SK-N-SH (cell line): ENCODE measurements at regions of chr10 and their contacts with region 1.

Region 1: DNA sequence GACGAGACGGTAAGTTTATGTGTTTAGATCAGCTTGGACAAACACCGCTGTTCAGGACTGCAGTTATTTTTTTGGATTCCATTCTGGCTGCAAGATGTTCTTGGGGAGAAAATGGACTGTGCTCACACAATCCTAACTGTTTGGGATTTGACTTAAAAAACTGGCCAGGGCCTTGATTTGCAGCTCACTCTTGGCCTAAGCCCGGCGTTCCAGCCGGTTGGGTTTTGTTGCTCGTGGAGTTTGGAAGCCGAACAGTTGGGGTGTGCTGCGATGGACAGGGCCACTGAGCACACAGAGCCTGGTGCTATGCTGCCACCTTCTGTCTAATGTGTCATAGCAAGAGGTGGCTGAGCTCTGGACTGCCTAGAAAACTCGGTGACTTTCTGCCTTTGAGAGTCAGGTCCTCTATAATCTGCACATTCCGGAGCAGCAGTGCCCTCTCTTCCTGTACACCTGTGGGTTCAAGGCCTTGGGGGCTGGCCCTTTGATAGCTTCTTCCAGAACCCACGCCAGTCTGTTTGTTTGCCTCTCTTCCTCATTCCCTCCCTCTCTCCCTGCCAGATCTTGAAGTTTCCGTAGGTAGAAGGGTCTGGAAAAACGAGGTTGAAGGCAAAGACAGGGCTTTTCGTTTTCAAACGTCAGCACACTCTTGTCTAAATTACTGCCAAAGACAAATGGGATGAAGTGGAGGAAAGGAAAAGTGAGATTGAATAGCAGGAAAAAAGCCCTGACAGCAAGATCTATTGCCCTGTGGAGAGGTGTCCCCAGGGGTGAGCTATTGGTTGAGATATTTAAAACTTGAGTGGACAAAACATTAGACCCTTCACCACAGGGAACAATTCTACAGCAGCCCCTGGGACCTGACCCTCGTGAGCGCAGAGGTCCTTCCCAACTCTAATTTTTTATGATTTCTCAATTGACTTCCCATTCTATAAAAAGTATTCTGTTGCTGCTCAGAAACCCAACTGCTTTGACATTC is 167.5 kb upstream of the HABP2 start:
- DNase-seq: peak; percentile 74
- H3K4me3 ChIP-seq: peak overlapping the region in 1 of 2 experiments; percentile 20; a peak in 1 of 4 replicates
- H3K27ac ChIP-seq: no peak overlapping the region
- H3K4me1 ChIP-seq: peaks cover 0 to 7% of the 10 kb centered on the region in 2 experiments
- H3K27me3 ChIP-seq: no peaks in the 10 kb centered on the region
- CTCF ChIP-seq: peak; percentile 87
- EP300 ChIP-seq: no peak
- RAD21 ChIP-seq: peak; percentile 99

Region 2: DNA sequence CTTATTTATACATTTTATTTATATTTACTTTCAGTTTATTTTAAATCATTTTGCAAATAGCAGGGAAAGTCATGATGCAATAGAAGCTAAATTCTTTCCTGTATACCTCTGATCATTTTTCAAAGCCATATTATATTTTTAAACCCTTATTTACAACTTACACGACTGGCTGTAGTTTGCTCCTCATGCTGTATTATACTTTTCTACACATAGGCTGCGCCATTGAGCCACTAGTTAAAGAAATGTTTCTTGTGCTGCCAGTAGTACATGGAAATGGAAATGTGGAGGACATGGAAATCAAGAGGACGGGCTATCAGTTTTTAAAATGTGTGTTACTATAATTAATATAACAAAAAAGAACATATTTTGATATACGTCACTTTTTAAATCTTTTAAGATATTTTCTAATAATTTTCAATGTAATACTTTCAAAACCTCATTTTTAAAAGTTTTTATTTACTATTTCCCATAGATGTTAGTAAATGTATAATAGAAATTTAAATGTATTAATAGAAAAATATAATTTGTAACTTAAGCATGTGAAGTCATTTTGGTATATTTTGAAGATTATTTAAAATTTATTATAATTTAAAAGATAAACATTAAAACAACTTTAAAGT is 819.8 kb before region 1 on chr10:
- CTCF ChIA-PET with region 1: interaction called, 13 read pairs
- POLR2A ChIA-PET with region 1: no interaction called
- DNase-seq: peak; percentile 60
- H3K4me3 ChIP-seq: no peak overlapping the region; a peak in 1 of 4 replicates
- H3K27ac ChIP-seq: no peak overlapping the region
- H3K4me1 ChIP-seq: no peaks in the 10 kb centered on the region; a peak in 1 of 4 replicates
- H3K27me3 ChIP-seq: no peaks in the 10 kb centered on the region
- CTCF ChIP-seq: peak; percentile 78
- EP300 ChIP-seq: no peak
- RAD21 ChIP-seq: peak; percentile 96

Region 3: DNA sequence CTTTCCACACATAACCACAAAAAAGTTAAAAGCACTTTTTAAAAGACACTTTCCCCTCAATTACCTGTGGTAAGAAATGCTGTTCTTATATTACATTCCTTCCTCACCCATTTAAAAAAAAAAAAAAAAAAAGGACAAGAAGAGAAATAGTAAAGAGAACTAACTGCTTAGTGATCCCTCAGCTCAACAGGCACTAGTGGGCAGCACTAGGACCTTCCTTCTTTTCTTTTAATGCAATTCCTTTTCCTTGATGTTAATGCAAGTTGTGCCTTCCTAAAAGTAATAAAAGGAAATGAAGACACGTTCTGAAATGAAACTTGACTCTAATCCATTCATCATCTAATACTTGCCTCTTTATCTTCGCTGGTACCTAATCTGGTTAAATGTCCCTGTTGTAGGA is 245.6 kb before region 1 on chr10:
- CTCF ChIA-PET with region 1: interaction called, 18 read pairs
- POLR2A ChIA-PET with region 1: no interaction called
- DNase-seq: peak; percentile 37
- H3K4me3 ChIP-seq: no peak overlapping the region
- H3K27ac ChIP-seq: no peak overlapping the region
- H3K4me1 ChIP-seq: peaks cover 3 to 4% of the 10 kb centered on the region in 2 experiments; a peak in 2 of 4 replicates
- H3K27me3 ChIP-seq: no peaks in the 10 kb centered on the region
- CTCF ChIP-seq: peak; percentile 54
- EP300 ChIP-seq: no peak
- RAD21 ChIP-seq: peak; percentile 62

Region 4: GRCh38 chr10:113369365-113369694 is 16.0 kb before region 1 on chr10:
- CTCF ChIA-PET with region 1: interaction called, 20 read pairs
- POLR2A ChIA-PET with region 1: no interaction called
- DNase-seq: no peak
- H3K4me3 ChIP-seq: no peak overlapping the region
- H3K27ac ChIP-seq: no peak overlapping the region
- H3K4me1 ChIP-seq: peaks cover 0 to 4% of the 10 kb centered on the region in 2 experiments; a peak in 2 of 4 replicates
- H3K27me3 ChIP-seq: 0 out of 2 replicates have a peak, but pooled peaks cover 4% of the 10 kb centered on the region
- CTCF ChIP-seq: no peak
- EP300 ChIP-seq: no peak
- RAD21 ChIP-seq: no peak

Region 5: GRCh38 chr10:113454341-113455061 is 69.2 kb after region 1 on chr10:
- CTCF ChIA-PET with region 1: interaction called, 10 read pairs
- POLR2A ChIA-PET with region 1: no interaction called
- DNase-seq: peak; percentile 69
- H3K4me3 ChIP-seq: peak overlapping the region in 1 of 2 experiments; percentile 22; a peak in 2 of 4 replicates
- H3K27ac ChIP-seq: no peak overlapping the region
- H3K4me1 ChIP-seq: peaks cover 0 to 6% of the 10 kb centered on the region in 2 experiments; a peak in 1 of 4 replicates
- H3K27me3 ChIP-seq: no peaks in the 10 kb centered on the region
- CTCF ChIP-seq: peak; percentile 75
- EP300 ChIP-seq: no peak
- RAD21 ChIP-seq: peak; percentile 66